ENCODE measurements at regions of chr6 and their contacts with region 1.

Region 1: DNA sequence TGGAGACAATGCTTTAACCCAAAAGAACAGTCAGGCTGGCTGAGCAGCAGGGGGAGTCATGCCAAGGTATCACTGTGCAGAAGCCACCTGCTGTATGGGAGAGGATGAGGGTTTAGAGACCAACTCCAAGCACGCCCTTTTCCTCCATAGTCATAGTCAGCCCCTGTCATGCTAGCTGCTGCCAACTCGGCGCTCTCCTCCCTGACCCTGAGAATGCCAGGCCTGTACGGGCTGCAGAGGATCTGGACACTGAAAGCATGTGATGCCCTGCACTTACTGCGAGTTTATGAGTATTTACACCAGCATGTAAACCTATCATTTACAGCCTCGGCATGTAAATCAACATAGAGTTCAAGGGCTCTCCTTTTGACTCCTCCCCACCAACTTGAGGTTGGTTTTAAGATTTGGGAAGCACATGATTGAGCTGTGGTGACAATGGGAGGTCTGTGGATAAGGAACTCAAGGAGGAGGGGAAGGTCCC is 11.7 kb upstream of the SCUBE3 start:
- DNase-seq: no peak
- H3K4me3 ChIP-seq: no peak overlapping the region
- H3K27ac ChIP-seq: no peak overlapping the region
- H3K4me1 ChIP-seq: no peaks in the 10 kb centered on the region
- H3K27me3 ChIP-seq: peaks cover 0 to 64% (median 0%) of the 10 kb centered on the region in 4 donors
- CTCF ChIP-seq: no peak
- POLR2A ChIP-seq: no peak

Region 2: GRCh38 chr6:35146453-35146852 is 55.7 kb before region 1 on chr6:
- intact Hi-C with region 1: loop called (anchors 5 kb)
- DNase-seq: no peak
- H3K4me3 ChIP-seq: no peak overlapping the region
- H3K27ac ChIP-seq: no peak overlapping the region
- H3K4me1 ChIP-seq: peaks cover 0 to 2% (median 0%) of the 10 kb centered on the region in 3 donors
- H3K27me3 ChIP-seq: peaks cover 0 to 6% (median 0%) of the 10 kb centered on the region in 4 donors
- CTCF ChIP-seq: peak in 5 of 6 experiments; percentile 47 to 70 (median 66)
- POLR2A ChIP-seq: no peak